Activated CD4-positive, alpha-beta T cell treated with anti-CD3 and anti-CD28 coated beads for 36 hours (primary cell): ENCODE measurements at regions of chr14 and their contacts with region 1.

Region 1: GRCh38 chr14:92951912-92952471 is 29.0 kb downstream of the CHGA start:
- DNase-seq: peak; percentile 89
- ATAC-seq: peak; percentile 99
- H3K4me3 Mint-ChIP-seq: no peak overlapping the region
- H3K27ac Mint-ChIP-seq: no peak overlapping the region
- H3K4me1 Mint-ChIP-seq: peaks cover 5% of the 10 kb centered on the region
- H3K27me3 Mint-ChIP-seq: no peaks in the 10 kb centered on the region

Region 2: GRCh38 chr14:92844204-92844603 is 107.8 kb before region 1 on chr14:
- CTCF ChIA-PET with region 1: no interaction called
- POLR2A ChIA-PET with region 1: no interaction called
- intact Hi-C with region 1: no loop called
- DNase-seq: peak; percentile 59
- ATAC-seq: peak; percentile 78
- H3K4me3 Mint-ChIP-seq: no peak overlapping the region
- H3K27ac Mint-ChIP-seq: peak overlapping the region; percentile 16
- H3K4me1 Mint-ChIP-seq: peaks cover 34% of the 10 kb centered on the region
- H3K27me3 Mint-ChIP-seq: no peaks in the 10 kb centered on the region

Region 3: GRCh38 chr14:93132470-93133065 is 180.6 kb after region 1 on chr14:
- CTCF ChIA-PET with region 1: interaction called, 22 read pairs
- POLR2A ChIA-PET with region 1: no interaction called
- intact Hi-C with region 1: no loop called
- DNase-seq: peak; percentile 40
- ATAC-seq: peak; percentile 49
- H3K4me3 Mint-ChIP-seq: no peak overlapping the region
- H3K27ac Mint-ChIP-seq: no peak overlapping the region
- H3K4me1 Mint-ChIP-seq: no peaks in the 10 kb centered on the region
- H3K27me3 Mint-ChIP-seq: peaks cover 3% of the 10 kb centered on the region

Region 4: GRCh38 chr14:93137864-93138263 is 185.9 kb after region 1 on chr14:
- CTCF ChIA-PET with region 1: interaction called, 22 read pairs
- POLR2A ChIA-PET with region 1: no interaction called
- intact Hi-C with region 1: loop called (anchors 1 kb)
- DNase-seq: no peak
- ATAC-seq: no peak
- H3K4me3 Mint-ChIP-seq: no peak overlapping the region
- H3K27ac Mint-ChIP-seq: no peak overlapping the region
- H3K4me1 Mint-ChIP-seq: peaks cover 2% of the 10 kb centered on the region
- H3K27me3 Mint-ChIP-seq: no peaks in the 10 kb centered on the region

Region 5: DNA sequence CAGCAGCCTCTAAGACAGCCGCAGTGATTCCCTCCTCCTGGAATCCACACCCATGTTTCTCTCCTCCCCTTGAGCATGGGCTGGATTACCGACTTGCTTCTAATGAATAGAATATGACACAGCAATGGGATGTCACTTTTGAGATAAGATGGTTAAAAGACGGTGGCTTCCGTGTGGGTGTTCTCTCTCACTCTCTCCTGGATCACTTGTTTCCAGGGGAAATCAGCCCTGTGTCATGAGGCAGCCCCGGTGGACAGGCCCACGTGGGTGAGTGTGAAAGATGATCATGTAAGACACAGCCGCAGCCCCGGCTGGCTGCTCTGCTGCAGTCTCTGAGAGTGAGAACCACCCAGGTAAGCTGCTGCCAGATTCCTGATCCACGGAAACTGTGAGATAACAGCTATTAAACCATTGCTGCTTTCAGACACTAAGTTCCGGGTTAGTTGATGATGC is 222.0 kb after region 1 on chr14:
- CTCF ChIA-PET with region 1: interaction called, 5 read pairs
- POLR2A ChIA-PET with region 1: no interaction called
- intact Hi-C with region 1: loop called in 1 of 2 experiments (anchors 1 kb)
- DNase-seq: no peak
- ATAC-seq: peak; percentile 30
- H3K4me3 Mint-ChIP-seq: no peak overlapping the region
- H3K27ac Mint-ChIP-seq: no peak overlapping the region
- H3K4me1 Mint-ChIP-seq: no peaks in the 10 kb centered on the region
- H3K27me3 Mint-ChIP-seq: no peaks in the 10 kb centered on the region

Region 6: GRCh38 chr14:93219103-93219726 is 267.2 kb after region 1 on chr14:
- CTCF ChIA-PET with region 1: interaction called, 4 read pairs
- POLR2A ChIA-PET with region 1: no interaction called
- intact Hi-C with region 1: loop called in 1 of 2 experiments (anchors 1 kb)
- DNase-seq: peak; percentile 57
- ATAC-seq: peak; percentile 63
- H3K4me3 Mint-ChIP-seq: no peak overlapping the region
- H3K27ac Mint-ChIP-seq: no peak overlapping the region
- H3K4me1 Mint-ChIP-seq: no peaks in the 10 kb centered on the region
- H3K27me3 Mint-ChIP-seq: no peaks in the 10 kb centered on the region

Region 7: GRCh38 chr14:93543766-93544165 is 591.8 kb after region 1 on chr14:
- CTCF ChIA-PET with region 1: interaction called, 3 read pairs
- POLR2A ChIA-PET with region 1: no interaction called
- intact Hi-C with region 1: loop called in 1 of 2 experiments (anchors 10 kb)
- DNase-seq: no peak
- ATAC-seq: no peak
- H3K4me3 Mint-ChIP-seq: no peak overlapping the region
- H3K27ac Mint-ChIP-seq: no peak overlapping the region
- H3K4me1 Mint-ChIP-seq: no peaks in the 10 kb centered on the region
- H3K27me3 Mint-ChIP-seq: peaks cover 12% of the 10 kb centered on the region

Region 8: DNA sequence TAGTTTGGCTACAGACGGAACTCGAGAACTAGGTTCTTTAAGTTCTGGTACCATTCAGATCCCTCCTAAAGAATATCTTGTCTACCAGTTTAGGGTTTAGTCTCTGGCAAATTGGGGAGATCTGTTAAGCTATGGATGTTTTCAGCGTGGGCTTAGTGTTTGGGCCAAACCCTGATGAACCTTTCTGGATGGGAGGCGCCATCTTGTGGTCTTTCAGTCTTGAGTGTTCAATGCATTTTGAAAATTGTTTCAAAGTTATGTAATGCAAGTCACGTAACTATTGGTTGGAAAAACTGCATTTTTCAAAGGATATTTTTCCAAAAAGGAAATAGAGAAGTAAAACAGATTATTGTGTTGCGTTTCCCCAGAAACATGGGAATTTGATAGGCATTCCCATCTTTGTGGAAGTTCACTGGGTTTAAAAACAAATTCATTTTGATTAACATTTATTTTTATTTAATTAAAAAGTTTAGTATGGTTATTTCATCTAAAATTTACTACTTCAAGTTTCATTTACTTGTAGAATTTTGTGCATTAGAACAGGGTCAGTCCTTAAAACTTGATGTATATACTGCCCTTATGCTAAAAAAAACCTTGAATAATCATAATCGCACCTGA is 667.3 kb after region 1 on chr14:
- CTCF ChIA-PET with region 1: no interaction called
- POLR2A ChIA-PET with region 1: no interaction called
- intact Hi-C with region 1: loop called in 1 of 2 experiments (anchors 5 kb)
- DNase-seq: peak; percentile 53
- ATAC-seq: no peak
- H3K4me3 Mint-ChIP-seq: no peak overlapping the region
- H3K27ac Mint-ChIP-seq: no peak overlapping the region
- H3K4me1 Mint-ChIP-seq: no peaks in the 10 kb centered on the region
- H3K27me3 Mint-ChIP-seq: peaks cover 12% of the 10 kb centered on the region